MCF 10A (cell line): ENCODE measurements at regions of chr18 and their contacts with region 1.

Region 1: DNA sequence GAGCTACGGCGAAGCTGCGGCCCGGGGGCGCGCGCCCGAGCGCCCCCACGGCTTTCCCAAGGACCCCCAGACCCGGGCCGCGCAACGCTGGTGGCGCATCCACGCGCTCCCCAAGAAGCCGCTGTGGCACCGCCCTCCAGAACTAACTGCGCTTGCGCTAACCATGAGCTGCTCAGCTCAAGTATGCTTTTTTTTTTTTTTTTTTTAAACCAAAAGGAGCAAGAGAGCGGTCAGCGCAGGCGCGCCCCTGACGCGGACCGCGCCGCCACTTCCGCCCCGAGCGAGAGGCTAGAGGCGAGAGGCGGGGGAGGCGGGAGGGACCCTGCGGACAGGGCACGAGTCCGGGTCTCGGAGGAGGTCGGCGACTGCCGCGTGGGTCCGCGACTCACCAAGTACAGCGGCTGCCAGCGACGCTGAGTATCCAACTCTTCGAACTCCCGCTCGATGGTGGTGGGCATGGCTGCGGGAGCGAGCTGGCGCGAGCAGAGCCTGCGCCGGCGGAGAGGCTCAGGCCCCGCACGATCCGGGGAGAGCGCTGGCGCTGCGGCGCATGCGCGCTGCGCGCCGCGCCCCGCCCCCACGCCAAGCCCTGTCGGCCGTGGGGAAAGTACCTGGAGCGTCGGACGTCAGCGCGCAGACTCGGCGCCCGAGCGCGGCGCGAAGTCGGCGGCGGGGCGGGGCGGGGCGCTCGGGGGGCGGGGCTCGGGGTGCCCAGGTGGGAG is at the start of gene PTPN2:
- DNase-seq: peak; percentile 89
- H3K4me3 Mint-ChIP-seq: peak within 1 kb of the TSS; percentile 73
- H3K27ac Mint-ChIP-seq: peak within 1 kb of the TSS; percentile 96
- H3K4me1 Mint-ChIP-seq: peaks cover 29% of the 10 kb centered on the region
- H3K27me3 Mint-ChIP-seq: no peaks in the 10 kb centered on the region
- CTCF ChIP-seq: no peak
- total RNA-seq, gene PTPN2: 60.0 and 75.2 TPM in 2 replicates

Region 2: DNA sequence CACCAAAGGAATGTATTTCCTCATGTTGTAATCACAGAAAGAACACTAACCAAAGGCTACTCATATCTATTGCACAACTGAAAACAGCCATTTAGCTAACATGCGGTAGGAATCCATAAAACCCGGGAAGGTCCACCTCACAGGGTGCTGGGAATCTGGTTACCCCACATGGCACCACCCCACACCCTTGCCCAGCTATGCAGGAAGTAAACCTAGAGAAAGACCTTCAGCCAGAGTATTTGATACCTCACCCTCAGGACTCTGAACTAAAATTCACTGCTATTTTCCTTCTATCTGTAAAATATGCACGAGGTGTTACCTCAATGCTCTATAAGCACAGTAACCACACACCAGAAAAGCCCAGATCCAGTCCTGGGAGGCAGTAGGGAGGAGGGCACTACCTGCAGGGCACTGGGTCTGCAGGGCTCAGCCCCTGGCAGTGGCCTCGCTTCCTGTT is 45.6 kb before region 1 on chr18:
- CTCF ChIA-PET with region 1: interaction called, 4 read pairs
- POLR2A ChIA-PET with region 1: interaction called, 34 read pairs
- intact Hi-C with region 1: loop called (anchors 2 kb)
- DNase-seq: peak; percentile 97
- H3K4me3 Mint-ChIP-seq: peak overlapping the region; percentile 64
- H3K27ac Mint-ChIP-seq: peak overlapping the region; percentile 87
- H3K4me1 Mint-ChIP-seq: peaks cover 36% of the 10 kb centered on the region
- H3K27me3 Mint-ChIP-seq: no peaks in the 10 kb centered on the region
- CTCF ChIP-seq: no peak

Region 3: GRCh38 chr18:12862467-12862866 is 21.4 kb before region 1 on chr18:
- CTCF ChIA-PET with region 1: interaction called, 3 read pairs
- POLR2A ChIA-PET with region 1: interaction called, 54 read pairs
- intact Hi-C with region 1: no loop called
- DNase-seq: peak; percentile 46
- H3K4me3 Mint-ChIP-seq: peak overlapping the region; percentile 61
- H3K27ac Mint-ChIP-seq: peak overlapping the region; percentile 79
- H3K4me1 Mint-ChIP-seq: peaks cover 31% of the 10 kb centered on the region
- H3K27me3 Mint-ChIP-seq: no peaks in the 10 kb centered on the region
- CTCF ChIP-seq: no peak